BJ (cell line): ENCODE measurements at regions of chr16 and their contacts with region 1.

Region 1: GRCh38 chr16:69586628-69587027 is 20.9 kb downstream of the NFAT5 start:
- DNase-seq: no peak
- H3K4me3 ChIP-seq: no peak overlapping the region
- H3K27me3 ChIP-seq: no peaks in the 10 kb centered on the region
- CTCF ChIP-seq: no peak

Region 2: DNA sequence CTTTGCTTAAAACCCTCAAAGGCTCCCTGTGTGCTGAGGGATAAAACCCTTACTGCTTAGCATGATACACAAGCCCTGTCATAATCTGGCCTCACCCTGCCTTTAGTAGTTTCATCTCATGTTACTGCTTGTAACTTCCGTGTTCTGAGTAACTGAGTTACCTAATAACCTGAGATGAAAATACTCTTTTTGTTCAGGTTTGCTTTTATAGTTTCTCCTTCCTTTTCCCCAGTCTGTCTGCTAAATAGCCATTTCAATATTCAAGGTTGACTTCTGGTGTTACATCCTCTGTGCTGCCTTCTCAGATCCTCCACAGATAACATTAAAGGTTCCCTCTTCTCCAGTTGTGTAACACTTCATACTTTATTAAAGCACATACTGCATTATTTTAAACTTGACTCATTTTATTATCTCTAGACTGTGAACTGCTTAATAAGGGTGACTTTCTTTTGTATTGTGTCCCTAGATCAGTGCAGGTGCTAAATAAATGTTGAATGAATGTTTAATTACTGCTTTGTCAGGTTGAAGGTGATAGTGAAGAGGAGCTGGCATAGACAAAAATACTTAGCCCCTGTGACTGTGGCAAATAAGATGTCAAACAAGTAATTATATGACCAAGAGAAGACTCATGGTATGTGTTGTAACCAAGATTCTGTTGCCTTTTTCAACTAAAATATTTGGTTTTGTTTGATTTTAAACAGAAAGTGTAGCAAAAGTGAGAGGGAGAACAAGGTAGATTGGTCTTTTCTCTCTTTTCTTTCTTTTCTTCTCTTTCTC is 26.9 kb after region 1 on chr16:
- CTCF ChIA-PET with region 1: no interaction called
- POLR2A ChIA-PET with region 1: interaction called, 13 read pairs
- DNase-seq: no peak
- H3K4me3 ChIP-seq: no peak overlapping the region
- H3K27me3 ChIP-seq: no peaks in the 10 kb centered on the region
- CTCF ChIP-seq: no peak

Region 3: GRCh38 chr16:69761983-69762813 is 175.6 kb after region 1 on chr16 and contains the start of gene WWP2:
- CTCF ChIA-PET with region 1: no interaction called
- POLR2A ChIA-PET with region 1: no interaction called
- DNase-seq: no peak
- H3K4me3 ChIP-seq: peak within 1 kb of the TSS; percentile 60
- H3K27me3 ChIP-seq: no peaks in the 10 kb centered on the region
- CTCF ChIP-seq: no peak
- polyA plus RNA-seq, gene WWP2: 9.4 and 16.8 TPM in 2 replicates